ENCODE measurements at regions of chr11 and their contacts with region 1.

Region 1: GRCh38 chr11:75204685-75205563 is 35.6 kb upstream of the TPBGL start:
- DNase-seq: peak; percentile 90
- ATAC-seq: peak; percentile 97
- H3K4me3 Mint-ChIP-seq: no peak overlapping the region
- H3K27ac Mint-ChIP-seq: no peak overlapping the region
- H3K4me1 Mint-ChIP-seq: no peaks in the 10 kb centered on the region
- H3K27me3 Mint-ChIP-seq: peaks cover 19% of the 10 kb centered on the region

Region 2: GRCh38 chr11:74929431-74930363 is 275.2 kb before region 1 on chr11:
- CTCF ChIA-PET with region 1: interaction called, 18 read pairs
- DNase-seq: peak; percentile 80
- ATAC-seq: peak; percentile 66
- H3K4me3 Mint-ChIP-seq: no peak overlapping the region
- H3K27ac Mint-ChIP-seq: no peak overlapping the region
- H3K4me1 Mint-ChIP-seq: peaks cover 54% of the 10 kb centered on the region
- H3K27me3 Mint-ChIP-seq: no peaks in the 10 kb centered on the region

Region 3: DNA sequence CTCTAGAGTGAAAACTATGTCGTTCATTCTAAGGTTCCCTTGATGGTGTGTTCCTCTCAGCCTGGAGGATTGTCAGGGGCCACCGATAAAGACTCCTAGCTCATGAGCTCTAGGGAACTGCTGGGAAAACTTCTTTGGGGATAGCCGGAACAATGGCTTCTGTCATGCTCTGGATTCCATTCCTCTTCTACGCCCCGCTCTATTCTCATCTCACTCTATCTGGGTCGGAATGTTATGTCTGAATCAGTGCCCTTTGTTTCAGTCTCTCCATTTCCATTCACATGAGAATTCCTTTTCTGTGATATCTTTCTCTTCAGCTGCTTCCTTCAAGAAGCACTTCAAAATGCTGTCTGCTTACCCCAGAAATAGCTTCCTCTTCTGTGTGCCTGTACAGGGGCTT is 70.9 kb before region 1 on chr11:
- CTCF ChIA-PET with region 1: interaction called, 556 read pairs
- DNase-seq: peak; percentile 22
- ATAC-seq: no peak
- H3K4me3 Mint-ChIP-seq: no peak overlapping the region
- H3K27ac Mint-ChIP-seq: no peak overlapping the region
- H3K4me1 Mint-ChIP-seq: no peaks in the 10 kb centered on the region
- H3K27me3 Mint-ChIP-seq: peaks cover 47% of the 10 kb centered on the region

Region 4: GRCh38 chr11:75160192-75160757 is 44.6 kb before region 1 on chr11:
- CTCF ChIA-PET with region 1: interaction called, 12 read pairs
- DNase-seq: no peak
- ATAC-seq: no peak
- H3K4me3 Mint-ChIP-seq: no peak overlapping the region
- H3K27ac Mint-ChIP-seq: no peak overlapping the region
- H3K4me1 Mint-ChIP-seq: peaks cover 5% of the 10 kb centered on the region
- H3K27me3 Mint-ChIP-seq: peaks cover 33% of the 10 kb centered on the region

Region 5: DNA sequence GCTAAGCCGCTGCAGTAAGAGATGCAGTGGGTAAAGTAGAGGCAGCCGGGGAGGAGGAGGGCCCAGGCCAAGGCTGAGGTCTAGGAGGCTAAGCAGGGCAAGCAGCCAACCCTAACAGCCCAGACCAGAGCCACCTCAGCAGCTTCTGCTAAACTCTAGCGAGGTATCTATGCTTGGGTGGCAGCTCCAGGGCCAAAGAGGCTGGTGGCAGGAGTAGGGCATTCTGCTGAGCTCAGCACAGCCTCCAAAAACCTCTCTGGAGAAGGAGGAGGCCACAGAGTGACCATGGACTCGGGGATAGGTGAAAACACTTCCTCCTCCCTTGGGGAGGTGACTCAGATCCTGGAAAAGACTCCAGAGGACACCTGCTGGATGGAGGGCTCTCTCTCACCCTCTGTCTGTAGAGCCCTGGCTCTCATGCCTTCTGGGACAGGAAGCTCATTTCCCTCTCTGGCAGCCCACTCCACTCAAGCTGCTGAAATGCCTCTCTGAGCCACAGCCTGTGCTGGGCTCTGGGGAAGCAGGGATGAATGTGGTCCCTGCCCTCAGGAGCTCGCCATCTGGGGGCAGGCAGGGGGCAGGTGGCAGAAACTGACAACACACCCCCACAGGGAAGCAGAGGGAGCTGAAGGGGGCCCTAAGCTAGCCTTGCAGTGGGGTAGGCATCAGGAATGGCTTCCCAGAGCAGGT is 19.2 kb after region 1 on chr11:
- CTCF ChIA-PET with region 1: interaction called, 10 read pairs
- DNase-seq: no peak
- ATAC-seq: no peak
- H3K4me3 Mint-ChIP-seq: no peak overlapping the region
- H3K27ac Mint-ChIP-seq: no peak overlapping the region
- H3K4me1 Mint-ChIP-seq: no peaks in the 10 kb centered on the region
- H3K27me3 Mint-ChIP-seq: peaks cover 14% of the 10 kb centered on the region

Region 6: GRCh38 chr11:75241036-75241905 is 36.3 kb after region 1 on chr11:
- CTCF ChIA-PET with region 1: interaction called, 16 read pairs
- DNase-seq: peak; percentile 88
- ATAC-seq: peak; percentile 97
- H3K4me3 Mint-ChIP-seq: peak overlapping the region; percentile 63
- H3K27ac Mint-ChIP-seq: no peak overlapping the region
- H3K4me1 Mint-ChIP-seq: peaks cover 9% of the 10 kb centered on the region
- H3K27me3 Mint-ChIP-seq: peaks cover 71% of the 10 kb centered on the region